ENCODE measurements at regions of chr20 and their contacts with region 1.

Region 1: GRCh38 chr20:58374906-58375791 is 13.9 kb upstream of the VAPB start:
- DNase-seq: no peak
- ATAC-seq: peak in 1 of 4 donors; percentile 31
- H3K4me3 ChIP-seq: no peak overlapping the region
- H3K27ac ChIP-seq: no peak overlapping the region
- H3K4me1 ChIP-seq: peaks cover 0 to 10% (median 0%) of the 10 kb centered on the region in 4 donors
- H3K27me3 ChIP-seq: no peaks in the 10 kb centered on the region
- CTCF ChIP-seq: no peak
- POLR2A ChIP-seq: no peak

Region 2: GRCh38 chr20:58309575-58310290 is 65.4 kb before region 1 on chr20 and contains the start of gene RAB22A:
- intact Hi-C with region 1: loop called in 1 of 2 experiments (anchors 10 kb)
- DNase-seq: peak; percentile 87 to 90 (median 90)
- ATAC-seq: peak; percentile 89 to 99 (median 95)
- H3K4me3 ChIP-seq: peak within 1 kb of the TSS; percentile 77 to 100 (median 94)
- H3K27ac ChIP-seq: peak within 1 kb of the TSS; percentile 59 to 92 (median 60)
- H3K4me1 ChIP-seq: peaks cover 0 to 8% (median 0%) of the 10 kb centered on the region in 4 donors
- H3K27me3 ChIP-seq: no peaks in the 10 kb centered on the region
- CTCF ChIP-seq: no peak
- POLR2A ChIP-seq: peak; percentile 93
- total RNA-seq, gene RAB22A: 7.4 to 11.6 (median 9.5) TPM

Region 3: DNA sequence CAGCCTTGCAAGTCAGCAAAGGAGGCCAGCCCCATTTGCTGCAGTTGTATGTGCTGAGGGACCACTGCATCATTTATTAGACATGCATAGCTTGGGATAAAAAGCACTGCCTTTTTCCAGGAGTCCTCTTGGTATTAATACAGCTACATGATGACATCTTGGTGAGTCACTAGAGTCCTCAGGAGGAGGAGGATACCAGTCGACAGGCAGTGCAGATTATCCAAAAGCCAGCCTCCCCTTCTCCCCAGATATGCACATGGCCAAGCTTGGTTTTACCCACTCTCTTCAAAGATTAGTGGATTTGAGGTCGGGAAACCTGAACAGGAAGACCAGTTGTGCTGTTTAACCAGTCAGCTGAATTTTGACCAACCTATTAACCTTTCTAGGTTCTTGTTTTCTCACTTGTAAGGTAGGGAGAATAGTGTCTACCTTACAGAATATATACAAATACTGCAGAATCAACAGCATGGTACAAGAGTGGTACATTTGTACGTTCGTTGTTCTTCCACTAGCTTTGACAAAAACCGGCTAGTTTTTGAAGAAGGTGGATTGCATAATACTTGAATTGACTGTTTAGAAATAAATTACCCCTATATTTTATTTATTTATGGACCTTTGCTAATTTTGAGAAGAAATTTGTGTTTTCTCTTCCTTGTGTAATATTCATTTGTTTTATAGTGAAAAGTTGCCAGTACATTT is 45.8 kb after region 1 on chr20:
- intact Hi-C with region 1: no loop called
- DNase-seq: no peak
- ATAC-seq: no peak
- H3K4me3 ChIP-seq: no peak overlapping the region
- H3K27ac ChIP-seq: no peak overlapping the region
- H3K4me1 ChIP-seq: peaks cover 0 to 11% (median 4%) of the 10 kb centered on the region in 4 donors
- H3K27me3 ChIP-seq: no peaks in the 10 kb centered on the region
- CTCF ChIP-seq: no peak
- POLR2A ChIP-seq: no peak

Region 4: GRCh38 chr20:58447511-58448391 is 72.6 kb after region 1 on chr20:
- intact Hi-C with region 1: no loop called
- DNase-seq: peak; percentile 61 to 67 (median 61)
- ATAC-seq: peak; percentile 89 to 92 (median 90)
- H3K4me3 ChIP-seq: no peak overlapping the region
- H3K27ac ChIP-seq: no peak overlapping the region
- H3K4me1 ChIP-seq: no peaks in the 10 kb centered on the region
- H3K27me3 ChIP-seq: no peaks in the 10 kb centered on the region
- CTCF ChIP-seq: peak; percentile 63 to 75 (median 72)
- POLR2A ChIP-seq: no peak

Measured in right lobe of liver (tissue), 6 donors.